HCT116 (cell line): ENCODE measurements at regions of chr12 and their contacts with region 1.

Region 1: DNA sequence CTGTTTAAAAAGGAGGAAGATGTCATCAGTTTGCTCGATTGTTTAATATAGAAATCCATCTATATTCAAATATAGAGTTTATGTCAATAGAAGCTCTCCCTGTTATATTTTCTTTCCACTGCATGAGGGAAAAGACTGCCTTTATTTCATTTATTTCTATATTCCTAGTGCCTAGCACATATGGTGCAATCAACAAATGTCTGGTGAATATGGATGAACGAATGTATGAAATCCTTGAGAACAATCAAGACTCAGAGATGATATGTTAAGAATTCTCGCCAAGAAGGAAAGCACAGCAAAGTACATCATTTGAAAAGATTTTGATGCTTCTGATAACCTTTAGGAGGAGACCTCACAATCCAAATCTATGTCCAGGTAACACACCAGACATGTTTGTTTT is 296.0 kb upstream of the LMO3 start:
- DNase-seq: no peak
- ATAC-seq: no peak
- H3K4me3 ChIP-seq: no peak overlapping the region
- H3K27ac ChIP-seq: no peak overlapping the region
- H3K4me1 ChIP-seq: no peaks in the 10 kb centered on the region
- H3K27me3 ChIP-seq: no peaks in the 10 kb centered on the region
- CTCF ChIP-seq: no peak
- POLR2A ChIP-seq: no peak
- RAD21 ChIP-seq: no peak

Region 2: GRCh38 chr12:16972897-16973770 is 71.2 kb after region 1 on chr12:
- CTCF ChIA-PET with region 1: no interaction called
- POLR2A ChIA-PET with region 1: no interaction called
- RAD21 ChIA-PET with region 1: no interaction called
- intact Hi-C with region 1: loop called (anchors 10 kb)
- DNase-seq: no peak
- ATAC-seq: no peak
- H3K4me3 ChIP-seq: no peak overlapping the region
- H3K27ac ChIP-seq: no peak overlapping the region
- H3K4me1 ChIP-seq: no peaks in the 10 kb centered on the region
- H3K27me3 ChIP-seq: no peaks in the 10 kb centered on the region
- CTCF ChIP-seq: no peak
- POLR2A ChIP-seq: no peak
- RAD21 ChIP-seq: no peak